Dendritic cell treated with granulocyte-macrophage colony-stimulating factor and Interleukin-4, amounts not matched to agents 40 ng/mL and 50 ng/mL, for 4 days (primary cell): ENCODE measurements at regions of chr6 and their contacts with region 1.

Region 1: GRCh38 chr6:161393839-161394364 is 120.0 kb upstream of the AGPAT4 start:
- H3K4me3 Mint-ChIP-seq: no peak overlapping the region
- H3K27ac Mint-ChIP-seq: no peak overlapping the region
- H3K4me1 Mint-ChIP-seq: no peaks in the 10 kb centered on the region
- H3K27me3 Mint-ChIP-seq: peaks cover 5% of the 10 kb centered on the region

Region 2: DNA sequence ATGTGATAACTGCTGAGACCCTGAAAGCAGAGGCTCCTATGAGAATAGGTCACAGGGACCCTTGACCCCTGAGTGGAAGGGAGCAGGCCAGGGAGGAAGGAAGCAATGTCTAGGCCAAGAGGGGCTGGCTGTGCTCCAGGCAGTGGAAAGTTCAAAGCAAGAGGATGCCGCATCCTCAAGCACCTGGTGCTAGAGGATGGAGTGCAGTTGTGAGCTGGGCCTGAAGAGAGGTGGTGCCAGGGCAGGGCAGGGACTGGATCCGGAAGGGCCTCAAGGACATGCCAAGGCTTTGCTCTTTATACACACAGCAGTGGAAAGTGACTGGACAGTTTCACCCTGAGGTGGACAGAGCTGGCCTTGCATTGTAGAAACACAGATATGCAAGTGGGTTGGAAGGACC is 948.8 kb before region 1 on chr6:
- intact Hi-C with region 1: no loop called
- H3K4me3 Mint-ChIP-seq: no peak overlapping the region
- H3K27ac Mint-ChIP-seq: no peak overlapping the region
- H3K4me1 Mint-ChIP-seq: no peaks in the 10 kb centered on the region
- H3K27me3 Mint-ChIP-seq: peaks cover 36% of the 10 kb centered on the region

Region 3: GRCh38 chr6:161694995-161695394 is 301.1 kb after region 1 on chr6:
- intact Hi-C with region 1: loop called (anchors 5 kb)
- H3K4me3 Mint-ChIP-seq: no peak overlapping the region
- H3K27ac Mint-ChIP-seq: no peak overlapping the region
- H3K4me1 Mint-ChIP-seq: no peaks in the 10 kb centered on the region
- H3K27me3 Mint-ChIP-seq: no peaks in the 10 kb centered on the region

Region 4: DNA sequence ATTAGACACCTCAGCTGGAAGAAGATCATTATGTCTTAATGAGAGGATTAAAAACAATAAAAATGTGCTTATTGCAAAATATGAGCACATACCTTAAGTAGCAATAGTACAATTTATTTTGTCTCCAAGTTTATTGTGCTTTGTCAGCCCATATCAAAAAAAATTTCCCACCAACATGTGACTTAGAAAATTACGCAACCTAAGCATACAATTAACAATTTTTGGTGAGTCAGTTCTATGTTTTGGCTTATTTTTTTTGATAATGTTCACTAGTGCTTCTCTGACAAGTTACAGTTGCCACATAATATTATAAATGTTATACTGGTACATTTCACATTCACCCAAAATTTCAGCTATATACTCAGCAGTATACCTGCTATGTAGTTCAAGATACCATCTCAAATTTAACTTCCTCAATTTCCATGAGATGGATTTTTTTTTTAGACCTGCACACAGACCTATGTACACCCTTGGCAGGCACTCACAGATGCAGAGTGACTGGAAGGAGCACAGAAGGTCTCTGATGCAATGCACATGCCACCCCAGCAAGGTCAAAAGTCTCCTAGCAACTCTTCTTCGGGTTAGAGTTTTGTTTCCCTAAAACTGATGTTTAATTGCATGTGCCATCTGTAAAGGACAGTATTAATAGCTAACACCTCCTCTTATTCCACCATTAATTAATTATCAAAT is 1221.3 kb after region 1 on chr6:
- intact Hi-C with region 1: loop called (anchors 10 kb)
- H3K4me3 Mint-ChIP-seq: no peak overlapping the region
- H3K27ac Mint-ChIP-seq: no peak overlapping the region
- H3K4me1 Mint-ChIP-seq: no peaks in the 10 kb centered on the region
- H3K27me3 Mint-ChIP-seq: no peaks in the 10 kb centered on the region